Breast epithelium (tissue), 4 donors: ENCODE measurements at regions of chr4 and their contacts with region 1.

Region 1: DNA sequence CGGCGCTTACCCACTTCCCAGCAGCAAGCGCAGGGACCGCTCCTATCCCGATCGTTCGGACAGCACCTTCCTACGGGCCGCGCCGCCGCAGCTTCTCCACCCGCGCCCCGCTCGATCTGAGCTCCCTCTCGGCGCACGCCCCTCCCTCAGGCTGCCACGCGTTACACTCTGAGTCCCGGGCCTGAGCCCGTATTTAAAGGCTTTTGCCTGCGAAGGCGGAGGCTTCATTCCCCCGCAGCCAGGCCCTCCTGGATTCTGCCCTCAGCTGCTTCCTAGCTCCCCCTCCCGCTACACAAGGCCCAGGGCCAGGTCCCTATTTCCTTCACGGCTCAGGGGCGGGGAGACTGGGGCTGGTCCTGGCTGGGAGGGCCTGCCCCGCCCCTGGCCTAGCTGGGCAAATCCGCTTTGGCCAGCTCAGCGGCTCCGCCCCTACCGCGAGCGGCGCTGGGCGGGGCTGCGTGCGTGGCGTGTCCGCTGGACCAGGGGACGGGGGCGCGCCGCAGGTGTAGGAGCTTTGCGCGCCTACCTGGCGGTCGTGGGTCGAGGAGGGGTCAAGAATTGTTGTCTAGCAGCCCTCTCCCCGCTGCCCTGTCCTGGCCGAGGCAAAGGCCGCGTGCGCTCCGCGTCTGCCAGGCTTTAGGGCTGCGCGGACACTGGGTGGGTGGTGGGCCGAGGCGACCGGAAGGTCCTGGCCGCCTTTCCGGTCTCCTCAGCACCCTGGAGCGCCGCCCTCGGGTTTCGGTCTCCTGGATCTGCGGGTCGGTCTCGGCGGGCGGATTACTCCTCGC is at the start of gene UGDH:
- DNase-seq: peak; percentile 94
- H3K4me3 ChIP-seq: peak within 1 kb of the TSS; percentile 77 to 94 (median 78)
- H3K27ac ChIP-seq: peak within 1 kb of the TSS; percentile 95 to 97
- H3K4me1 ChIP-seq: no peaks in the 10 kb centered on the region
- H3K27me3 ChIP-seq: no peaks in the 10 kb centered on the region
- CTCF ChIP-seq: no peak
- POLR2A ChIP-seq: peak; percentile 92
- total RNA-seq, gene UGDH: 68.3 to 134 (median 74.9) TPM

Region 2: GRCh38 chr4:39638354-39639240 is 111.1 kb after region 1 on chr4 and contains the start of gene SMIM14:
- intact Hi-C with region 1: loop called (anchors 5 kb)
- DNase-seq: peak; percentile 96 to 98
- H3K4me3 ChIP-seq: peak within 1 kb of the TSS; percentile 68 to 91 (median 90)
- H3K27ac ChIP-seq: peak within 1 kb of the TSS; percentile 91 to 99
- H3K4me1 ChIP-seq: peaks cover 0 to 11% of the 10 kb centered on the region in 2 donors
- H3K27me3 ChIP-seq: no peaks in the 10 kb centered on the region
- CTCF ChIP-seq: peak in 1 of 3 donors; percentile 46
- POLR2A ChIP-seq: peak; percentile 86
- total RNA-seq, gene SMIM14: 38.7 to 71.0 (median 43.6) TPM